Mammary epithelial cell (primary cell): ENCODE measurements at regions of chr20 and their contacts with region 1.

Region 1: GRCh38 chr20:32681175-32682084 is 7.7 kb upstream of the C20orf203 start:
- DNase-seq: peak; percentile 78
- H3K4me3 ChIP-seq: no peak overlapping the region
- H3K27ac ChIP-seq: no peak overlapping the region
- H3K4me1 ChIP-seq: peaks cover 20% of the 10 kb centered on the region
- H3K27me3 ChIP-seq: no peaks in the 10 kb centered on the region
- CTCF ChIP-seq: no peak

Region 2: GRCh38 chr20:32535953-32536823 is 145.2 kb before region 1 on chr20:
- CTCF ChIA-PET with region 1: no interaction called
- dilution Hi-C with region 1: no loop called
- in situ Hi-C with region 1: no loop called
- intact Hi-C with region 1: no loop called
- DNase-seq: no peak
- H3K4me3 ChIP-seq: peak overlapping the region in 2 of 3 experiments; percentile 34 to 49
- H3K27ac ChIP-seq: no peak overlapping the region
- H3K4me1 ChIP-seq: peaks cover 11% of the 10 kb centered on the region
- H3K27me3 ChIP-seq: no peaks in the 10 kb centered on the region
- CTCF ChIP-seq: no peak

Region 3: DNA sequence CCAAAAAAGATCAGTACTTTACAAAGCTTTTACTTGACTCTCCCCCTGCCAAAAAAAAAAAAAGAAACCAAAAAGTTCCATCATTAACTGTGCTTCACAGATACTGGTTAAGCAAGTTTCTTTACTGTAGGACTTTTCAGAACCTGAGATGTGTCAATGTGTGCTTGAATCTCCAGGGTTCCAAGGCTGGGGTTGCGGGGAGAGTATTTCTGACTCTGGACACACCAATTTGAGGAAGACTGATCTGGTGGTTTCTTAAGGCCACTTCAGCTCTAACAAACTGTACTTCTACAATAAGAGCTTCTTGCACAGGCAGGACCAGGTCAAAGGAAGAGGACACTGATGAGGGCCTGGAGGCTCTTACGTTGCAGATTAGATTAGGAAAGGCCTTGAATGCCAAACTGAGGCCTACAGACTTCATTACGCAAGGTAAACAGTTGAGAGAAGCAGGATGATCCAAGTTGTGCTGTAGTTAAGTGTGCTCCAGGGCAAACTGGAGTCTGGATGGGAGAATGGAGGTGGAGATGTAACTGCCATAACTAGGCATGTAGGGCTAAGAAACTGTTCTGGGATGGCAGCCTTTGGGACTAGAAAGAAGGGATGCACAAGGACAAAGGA is 37.4 kb after region 1 on chr20:
- CTCF ChIA-PET with region 1: no interaction called
- dilution Hi-C with region 1: loop called (anchors 5 kb)
- in situ Hi-C with region 1: no loop called
- intact Hi-C with region 1: no loop called
- DNase-seq: no peak
- H3K4me3 ChIP-seq: no peak overlapping the region
- H3K27ac ChIP-seq: no peak overlapping the region
- H3K4me1 ChIP-seq: no peaks in the 10 kb centered on the region
- H3K27me3 ChIP-seq: no peaks in the 10 kb centered on the region
- CTCF ChIP-seq: no peak

Region 4: DNA sequence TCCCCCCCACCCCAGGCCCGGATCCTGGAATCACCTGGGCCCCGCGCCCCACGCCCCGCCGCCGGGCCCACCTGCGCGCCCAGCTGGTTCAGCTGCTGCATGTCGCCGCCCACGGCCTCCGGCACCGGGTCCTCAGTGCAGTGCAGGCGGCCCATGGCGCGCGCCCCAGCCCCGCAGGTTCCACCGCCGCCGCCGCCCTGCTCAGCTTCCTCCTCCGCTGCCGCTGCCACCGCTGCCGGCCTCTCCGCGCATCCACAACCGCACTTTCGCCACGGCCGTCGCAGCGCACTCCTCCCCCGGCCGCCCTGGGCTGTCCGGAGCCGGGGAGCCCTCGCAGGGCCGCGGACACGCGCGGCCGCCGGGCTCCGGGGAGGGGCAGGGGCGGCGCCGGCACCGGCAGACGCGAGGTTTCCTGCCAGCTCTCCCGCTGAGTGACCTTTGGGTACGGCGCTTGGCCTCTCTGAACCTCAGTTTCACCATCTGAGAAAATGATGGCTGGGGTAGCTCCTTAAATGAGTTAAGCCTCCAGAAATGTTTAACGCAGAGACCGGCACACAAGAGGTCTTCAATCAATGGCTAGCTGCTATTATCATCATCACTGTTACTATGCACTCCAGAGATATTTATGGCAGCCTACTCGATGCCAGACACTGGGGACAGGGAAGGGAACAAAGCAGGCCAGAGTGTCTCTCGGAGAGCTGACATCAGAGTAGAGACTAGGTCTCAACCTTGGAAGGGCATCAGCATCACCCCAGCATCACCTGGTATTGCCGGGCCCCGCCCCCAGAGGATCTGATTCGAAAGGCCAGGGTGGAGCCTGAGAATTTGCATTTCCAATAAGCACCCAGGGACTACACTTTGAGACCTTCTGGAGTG is 62.0 kb after region 1 on chr20 and contains the start of gene COMMD7:
- CTCF ChIA-PET with region 1: no interaction called
- dilution Hi-C with region 1: no loop called
- in situ Hi-C with region 1: no loop called
- intact Hi-C with region 1: loop called (anchors 5 kb)
- DNase-seq: peak; percentile 47
- H3K4me3 ChIP-seq: peak within 1 kb of the TSS; percentile 61 to 66 (median 64)
- H3K27ac ChIP-seq: no peak within 1 kb of the TSS
- H3K4me1 ChIP-seq: peaks cover 11% of the 10 kb centered on the region
- H3K27me3 ChIP-seq: no peaks in the 10 kb centered on the region
- CTCF ChIP-seq: no peak
- total RNA-seq, gene COMMD7: 29.4 to 29.5 TPM